ENCODE measurements at regions of chr1 and their contacts with region 1.

Region 1: DNA sequence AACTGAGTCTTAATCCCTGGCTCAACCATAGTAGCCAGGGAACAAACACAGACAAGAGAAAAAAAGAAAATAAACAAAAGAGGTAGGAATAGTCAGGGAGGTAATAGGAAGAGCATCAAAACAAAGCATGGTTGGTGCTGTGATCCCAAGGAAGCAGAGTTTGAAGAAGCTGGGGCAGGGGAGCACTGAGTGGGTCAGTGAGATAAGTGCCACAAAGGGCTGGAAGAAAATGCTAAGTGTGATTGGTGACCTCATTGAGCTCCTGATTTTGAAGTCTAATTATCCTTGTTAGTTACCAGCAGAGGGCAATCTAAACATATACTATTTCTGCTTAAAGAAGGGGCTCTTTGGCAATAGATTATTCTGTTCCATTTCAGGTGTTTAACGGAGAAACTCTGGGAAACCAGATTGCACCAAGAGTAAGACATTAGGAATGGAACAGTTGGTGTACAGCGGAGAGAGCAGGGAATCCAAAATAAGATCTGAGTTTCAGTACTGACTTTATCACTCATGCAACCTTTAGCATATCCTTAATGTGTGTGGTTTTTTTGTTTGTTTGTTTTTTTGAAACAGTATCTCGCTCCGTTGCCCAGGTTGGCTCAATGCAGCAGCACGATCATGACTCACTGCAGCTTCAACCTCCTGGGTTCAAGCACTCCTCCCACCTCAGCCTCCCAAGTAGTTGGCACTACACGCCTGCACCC is 30.7 kb upstream of the KIAA1614 start:
- DNase-seq: peak; percentile 69
- CTCF ChIP-seq: peak; percentile 30

Region 2: GRCh38 chr1:180863158-180863775 is 18.7 kb before region 1 on chr1:
- CTCF ChIA-PET with region 1: interaction called, 12 read pairs
- POLR2A ChIA-PET with region 1: no interaction called
- DNase-seq: no peak
- CTCF ChIP-seq: peak; percentile 72

Region 3: GRCh38 chr1:180898441-180899219 is 16.7 kb after region 1 on chr1:
- CTCF ChIA-PET with region 1: interaction called, 12 read pairs
- POLR2A ChIA-PET with region 1: no interaction called
- DNase-seq: no peak
- CTCF ChIP-seq: no peak

Region 4: GRCh38 chr1:180923021-180923841 is 41.3 kb after region 1 on chr1:
- CTCF ChIA-PET with region 1: interaction called, 10 read pairs
- POLR2A ChIA-PET with region 1: no interaction called
- DNase-seq: no peak
- CTCF ChIP-seq: no peak

Region 5: GRCh38 chr1:181166377-181167196 is 284.6 kb after region 1 on chr1:
- CTCF ChIA-PET with region 1: interaction called, 20 read pairs
- POLR2A ChIA-PET with region 1: no interaction called
- DNase-seq: peak; percentile 79
- CTCF ChIP-seq: peak; percentile 86

Measured in GM10248 (cell line).